ENCODE measurements at regions of chr15 and their contacts with region 1.

Region 1: GRCh38 chr15:41904541-41905005 is 10.7 kb upstream of the SPTBN5 start:
- DNase-seq: peak; percentile 89
- H3K4me3 ChIP-seq: no peak overlapping the region
- H3K27ac ChIP-seq: peak overlapping the region in 1 of 2 experiments; percentile 44; a peak in 1 of 4 replicates
- H3K4me1 ChIP-seq: peaks cover 0 to 19% of the 10 kb centered on the region in 2 experiments; a peak in 1 of 4 replicates
- H3K27me3 ChIP-seq: no peaks in the 10 kb centered on the region
- CTCF ChIP-seq: peak; percentile 88
- EP300 ChIP-seq: no peak
- RAD21 ChIP-seq: peak; percentile 96

Region 2: GRCh38 chr15:41465822-41466421 is 438.7 kb before region 1 on chr15:
- CTCF ChIA-PET with region 1: interaction called, 15 read pairs
- POLR2A ChIA-PET with region 1: no interaction called
- DNase-seq: peak; percentile 62
- H3K4me3 ChIP-seq: no peak overlapping the region
- H3K27ac ChIP-seq: no peak overlapping the region
- H3K4me1 ChIP-seq: no peaks in the 10 kb centered on the region
- H3K27me3 ChIP-seq: no peaks in the 10 kb centered on the region
- CTCF ChIP-seq: peak; percentile 97
- EP300 ChIP-seq: no peak
- RAD21 ChIP-seq: peak; percentile 92

Region 3: DNA sequence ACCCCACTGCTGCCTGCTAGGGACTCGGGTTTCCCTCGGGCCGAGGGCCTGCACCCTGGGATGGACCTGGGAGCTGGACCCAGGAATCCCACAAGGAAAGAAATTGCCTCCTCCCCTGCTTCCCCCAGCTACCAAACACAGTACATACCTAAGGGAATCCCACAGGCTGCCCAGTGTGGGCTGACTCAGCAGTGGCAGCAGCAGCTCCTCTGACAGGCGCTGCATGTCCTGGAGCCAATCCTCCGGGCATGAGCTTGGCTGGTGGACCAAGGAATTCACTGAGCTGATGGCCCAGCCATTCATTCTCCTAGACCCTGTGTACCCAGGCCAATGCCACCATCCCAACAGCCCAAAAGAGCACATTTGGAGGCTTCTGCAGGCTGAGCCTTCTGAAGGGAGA is 381.5 kb before region 1 on chr15:
- CTCF ChIA-PET with region 1: no interaction called
- POLR2A ChIA-PET with region 1: no interaction called
- DNase-seq: no peak
- H3K4me3 ChIP-seq: no peak overlapping the region
- H3K27ac ChIP-seq: no peak overlapping the region
- H3K4me1 ChIP-seq: peaks cover 0 to 2% of the 10 kb centered on the region in 2 experiments; a peak in 1 of 4 replicates
- H3K27me3 ChIP-seq: no peaks in the 10 kb centered on the region
- CTCF ChIP-seq: no peak
- EP300 ChIP-seq: no peak
- RAD21 ChIP-seq: no peak

Region 4: DNA sequence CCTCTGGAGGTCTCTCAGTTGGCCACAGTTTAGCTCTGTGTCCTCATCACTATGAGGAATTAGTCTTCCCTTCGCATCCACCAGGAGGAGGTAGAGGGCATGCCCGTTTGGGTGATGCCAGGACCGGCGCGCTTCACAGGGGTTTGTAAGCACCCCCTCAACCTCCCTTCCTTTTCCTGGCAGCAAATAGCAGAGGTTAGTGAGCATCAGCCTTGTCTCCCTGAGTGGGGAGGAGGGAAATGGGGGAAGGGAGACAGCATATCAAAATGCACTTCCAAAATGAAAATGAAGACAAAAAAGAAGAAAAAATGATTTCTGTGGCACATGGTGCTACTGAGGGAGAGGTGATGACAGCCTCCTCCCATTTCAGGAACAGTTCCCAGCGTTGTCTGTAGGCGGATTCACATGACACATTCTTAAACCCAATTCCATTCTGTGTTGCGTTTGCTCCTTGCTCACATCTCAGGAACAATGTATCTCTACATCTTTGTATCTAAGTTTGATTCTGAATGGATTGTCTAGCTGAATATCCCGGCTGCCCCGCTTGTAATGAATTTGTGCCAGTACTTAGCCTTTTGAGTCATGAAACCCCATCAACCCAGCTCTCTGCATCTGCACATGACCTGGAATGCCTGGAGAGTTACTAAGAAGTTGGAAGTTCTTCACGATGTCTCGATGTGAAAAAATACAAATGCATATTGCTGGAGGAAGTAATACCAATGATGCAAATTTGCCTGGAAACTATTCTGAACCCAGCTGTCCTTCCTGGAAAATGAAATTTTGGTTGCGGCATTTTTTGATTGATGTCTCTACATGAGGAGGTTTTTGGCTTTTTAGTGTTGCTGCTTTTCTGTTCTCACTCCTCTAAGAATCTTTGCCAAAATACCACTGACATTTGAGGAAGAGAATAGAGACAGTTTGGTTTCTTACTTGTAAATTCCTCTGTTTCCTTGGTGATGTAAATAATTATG is 300.3 kb before region 1 on chr15:
- CTCF ChIA-PET with region 1: interaction called, 11 read pairs
- POLR2A ChIA-PET with region 1: no interaction called
- DNase-seq: peak; percentile 84
- H3K4me3 ChIP-seq: peak overlapping the region; percentile 31 to 51
- H3K27ac ChIP-seq: peak overlapping the region in 1 of 2 experiments; percentile 64; a peak in 2 of 4 replicates
- H3K4me1 ChIP-seq: peaks cover 3 to 5% of the 10 kb centered on the region in 2 experiments; a peak in 3 of 4 replicates
- H3K27me3 ChIP-seq: no peaks in the 10 kb centered on the region
- CTCF ChIP-seq: peak; percentile 85
- EP300 ChIP-seq: no peak
- RAD21 ChIP-seq: peak; percentile 74

Region 5: GRCh38 chr15:41811432-41812195 is 93.0 kb before region 1 on chr15:
- CTCF ChIA-PET with region 1: interaction called, 56 read pairs
- POLR2A ChIA-PET with region 1: no interaction called
- DNase-seq: peak; percentile 89
- H3K4me3 ChIP-seq: no peak overlapping the region; a peak in 1 of 4 replicates
- H3K27ac ChIP-seq: no peak overlapping the region
- H3K4me1 ChIP-seq: peaks cover 0 to 2% of the 10 kb centered on the region in 2 experiments; a peak in 1 of 4 replicates
- H3K27me3 ChIP-seq: no peaks in the 10 kb centered on the region
- CTCF ChIP-seq: peak; percentile 92
- EP300 ChIP-seq: no peak
- RAD21 ChIP-seq: peak; percentile 98

Region 6: DNA sequence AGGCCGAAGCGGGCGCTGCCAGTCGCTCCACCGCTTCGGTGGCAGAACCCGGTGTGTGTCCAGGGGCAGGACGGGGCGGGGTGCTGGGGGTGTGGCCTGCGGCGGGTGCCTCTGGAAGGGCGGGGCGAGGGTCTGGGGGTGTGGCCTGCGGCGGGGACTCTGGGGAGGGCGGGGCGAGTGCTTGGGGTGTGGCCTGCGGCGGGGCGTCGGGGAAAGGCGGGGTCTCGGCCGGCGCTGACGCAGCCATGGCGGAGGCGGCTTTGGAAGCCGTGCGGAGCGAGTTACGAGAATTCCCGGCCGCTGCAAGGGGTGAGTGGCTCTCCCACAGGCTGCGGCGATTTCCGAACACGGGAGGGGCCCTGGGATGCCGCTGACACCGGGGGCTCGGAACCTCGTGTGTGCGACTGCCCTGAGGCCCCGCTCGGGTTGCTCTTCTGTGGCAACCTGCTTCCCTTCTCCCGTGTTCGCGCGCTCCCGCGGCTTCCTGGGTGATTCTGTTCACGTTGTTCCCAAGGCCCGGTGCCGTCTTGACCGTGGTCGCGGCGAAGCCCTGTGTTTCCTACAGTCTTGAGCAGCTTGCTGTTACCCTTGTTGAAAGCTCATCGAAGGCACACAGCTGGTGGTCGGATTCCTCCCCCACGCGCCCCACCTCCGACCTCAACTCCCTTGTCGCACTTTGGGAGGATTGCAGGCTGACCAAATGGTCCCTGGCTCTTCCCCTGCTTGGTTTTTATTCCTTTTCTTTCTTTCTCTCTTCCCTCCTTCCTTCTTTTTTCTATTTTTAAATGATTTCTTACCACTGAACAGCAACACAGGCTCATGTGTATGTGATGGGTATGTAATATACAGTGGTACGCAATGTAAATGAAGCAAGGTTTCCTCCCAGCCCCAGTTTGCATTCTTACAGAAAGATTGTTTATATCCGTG is 76.4 kb before region 1 on chr15 and contains the start of gene JMJD7:
- CTCF ChIA-PET with region 1: interaction called, 16 read pairs
- POLR2A ChIA-PET with region 1: no interaction called
- DNase-seq: peak; percentile 100
- H3K4me3 ChIP-seq: peak within 1 kb of the TSS; percentile 83 to 91
- H3K27ac ChIP-seq: peak within 1 kb of the TSS; percentile 50 to 74; a peak in 3 of 4 replicates
- H3K4me1 ChIP-seq: peaks cover 3 to 4% of the 10 kb centered on the region in 2 experiments; a peak in 3 of 4 replicates
- H3K27me3 ChIP-seq: no peaks in the 10 kb centered on the region
- CTCF ChIP-seq: no peak
- EP300 ChIP-seq: no peak
- RAD21 ChIP-seq: no peak
- polyA plus RNA-seq, gene JMJD7: 6.5 and 6.8 TPM in 2 replicates

Region 7: GRCh38 chr15:41860049-41860828 is 44.3 kb before region 1 on chr15:
- CTCF ChIA-PET with region 1: interaction called, 18 read pairs
- POLR2A ChIA-PET with region 1: no interaction called
- DNase-seq: no peak
- H3K4me3 ChIP-seq: no peak overlapping the region
- H3K27ac ChIP-seq: no peak overlapping the region
- H3K4me1 ChIP-seq: peaks cover 0 to 16% of the 10 kb centered on the region in 2 experiments; a peak in 1 of 4 replicates
- H3K27me3 ChIP-seq: no peaks in the 10 kb centered on the region
- CTCF ChIP-seq: no peak
- EP300 ChIP-seq: no peak
- RAD21 ChIP-seq: no peak

Region 8: DNA sequence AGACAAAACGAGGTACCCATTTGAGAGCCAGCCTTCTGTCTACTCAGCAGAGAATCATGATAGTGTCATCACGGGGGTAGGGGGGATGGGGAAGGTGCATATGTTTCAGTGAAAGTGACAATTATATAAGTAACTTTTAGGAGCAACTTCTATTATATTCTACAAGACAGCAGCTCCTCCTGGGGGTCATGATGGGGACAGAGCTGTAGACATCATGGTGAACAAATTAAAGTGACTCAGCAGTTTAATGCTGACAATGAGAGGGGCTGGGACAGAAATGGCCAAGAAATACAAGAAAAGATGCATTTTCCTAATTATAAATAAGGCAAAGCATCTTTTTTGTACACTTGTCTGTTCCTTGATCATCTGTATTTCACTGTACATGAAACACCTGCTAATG is 466.6 kb after region 1 on chr15:
- CTCF ChIA-PET with region 1: no interaction called
- POLR2A ChIA-PET with region 1: no interaction called
- DNase-seq: no peak
- H3K4me3 ChIP-seq: no peak overlapping the region
- H3K27ac ChIP-seq: no peak overlapping the region
- H3K4me1 ChIP-seq: no peaks in the 10 kb centered on the region
- H3K27me3 ChIP-seq: no peaks in the 10 kb centered on the region
- CTCF ChIP-seq: peak; percentile 22; the same call in 1 of the 2 replicates
- EP300 ChIP-seq: no peak
- RAD21 ChIP-seq: no peak

Measured in SK-N-SH (cell line).